ENCODE measurements at regions of chr4 and their contacts with region 1.

Region 1: GRCh38 chr4:185203486-185204237 is at the start of gene CFAP97:
- DNase-seq: peak; percentile 69 to 95
- H3K4me3 ChIP-seq: peak within 1 kb of the TSS; percentile 77 to 83
- H3K27ac ChIP-seq: peak within 1 kb of the TSS; percentile 99
- H3K4me1 ChIP-seq: peaks cover 2 to 20% of the 10 kb centered on the region in 2 donors
- H3K27me3 ChIP-seq: no peaks in the 10 kb centered on the region
- CTCF ChIP-seq: no peak
- total RNA-seq, gene CFAP97: 27.7 TPM

Region 2: DNA sequence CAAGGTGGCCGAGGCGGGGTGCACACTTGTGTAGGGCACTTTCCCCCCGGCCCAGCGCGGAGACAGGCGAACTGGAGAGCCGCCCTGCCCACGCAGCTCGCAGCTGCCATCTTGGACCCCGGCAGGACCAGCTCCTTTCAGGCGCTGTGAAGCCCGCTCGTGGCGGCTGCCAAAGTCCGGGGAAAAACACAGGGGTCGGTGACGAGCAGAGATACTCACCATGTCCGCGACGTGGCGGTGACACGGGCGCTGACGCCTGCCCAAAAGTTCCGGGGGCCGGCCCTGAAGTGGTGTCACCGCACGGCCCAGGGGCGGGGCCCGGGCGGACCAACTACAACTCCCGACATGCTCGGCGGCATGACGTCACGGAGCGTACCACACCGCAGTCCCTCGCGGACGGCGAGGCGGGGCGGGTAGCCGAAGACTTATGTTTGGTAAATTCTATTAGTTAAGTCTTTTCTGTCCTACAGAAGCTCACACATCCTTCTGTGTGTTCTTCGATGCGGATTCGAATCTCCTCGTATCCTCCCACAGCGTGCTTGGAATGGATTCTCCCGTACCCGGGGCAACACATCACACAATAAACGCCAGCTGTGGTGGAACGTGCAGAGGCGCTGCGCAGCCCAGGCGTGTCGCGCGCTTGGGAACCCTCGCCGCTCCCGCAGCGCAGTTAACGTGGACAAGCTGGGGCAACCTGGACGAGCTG is 222.1 kb after region 1 on chr4 and contains the start of gene UFSP2:
- intact Hi-C with region 1: loop called (anchors 10 kb)
- DNase-seq: peak; percentile 69 to 95
- H3K4me3 ChIP-seq: peak within 1 kb of the TSS; percentile 66 to 80
- H3K27ac ChIP-seq: peak within 1 kb of the TSS; percentile 88 to 96
- H3K4me1 ChIP-seq: peaks cover 0 to 15% of the 10 kb centered on the region in 2 donors
- H3K27me3 ChIP-seq: no peaks in the 10 kb centered on the region
- CTCF ChIP-seq: no peak
- total RNA-seq, gene UFSP2: 8.6 TPM

Region 3: GRCh38 chr4:185591679-185592141 is 388.0 kb after region 1 on chr4:
- intact Hi-C with region 1: loop called (anchors 5 kb)
- DNase-seq: no peak
- H3K4me3 ChIP-seq: no peak overlapping the region
- H3K27ac ChIP-seq: peak overlapping the region; percentile 56 to 59
- H3K4me1 ChIP-seq: peaks cover 0 to 12% of the 10 kb centered on the region in 2 donors
- H3K27me3 ChIP-seq: no peaks in the 10 kb centered on the region
- CTCF ChIP-seq: no peak

Region 4: GRCh38 chr4:186191200-186192065 is 987.8 kb after region 1 on chr4 and contains the start of gene CYP4V2:
- intact Hi-C with region 1: loop called (anchors 10 kb)
- DNase-seq: peak in 1 of 2 donors; percentile 90
- H3K4me3 ChIP-seq: peak within 1 kb of the TSS; percentile 92 to 97
- H3K27ac ChIP-seq: peak within 1 kb of the TSS; percentile 95 to 97
- H3K4me1 ChIP-seq: peaks cover 0 to 15% of the 10 kb centered on the region in 2 donors
- H3K27me3 ChIP-seq: no peaks in the 10 kb centered on the region
- CTCF ChIP-seq: peak in 2 of 3 experiments; percentile 18 to 21
- total RNA-seq, gene CYP4V2: 14.3 TPM